ENCODE measurements at regions of chr3 and their contacts with region 1.

Region 1: DNA sequence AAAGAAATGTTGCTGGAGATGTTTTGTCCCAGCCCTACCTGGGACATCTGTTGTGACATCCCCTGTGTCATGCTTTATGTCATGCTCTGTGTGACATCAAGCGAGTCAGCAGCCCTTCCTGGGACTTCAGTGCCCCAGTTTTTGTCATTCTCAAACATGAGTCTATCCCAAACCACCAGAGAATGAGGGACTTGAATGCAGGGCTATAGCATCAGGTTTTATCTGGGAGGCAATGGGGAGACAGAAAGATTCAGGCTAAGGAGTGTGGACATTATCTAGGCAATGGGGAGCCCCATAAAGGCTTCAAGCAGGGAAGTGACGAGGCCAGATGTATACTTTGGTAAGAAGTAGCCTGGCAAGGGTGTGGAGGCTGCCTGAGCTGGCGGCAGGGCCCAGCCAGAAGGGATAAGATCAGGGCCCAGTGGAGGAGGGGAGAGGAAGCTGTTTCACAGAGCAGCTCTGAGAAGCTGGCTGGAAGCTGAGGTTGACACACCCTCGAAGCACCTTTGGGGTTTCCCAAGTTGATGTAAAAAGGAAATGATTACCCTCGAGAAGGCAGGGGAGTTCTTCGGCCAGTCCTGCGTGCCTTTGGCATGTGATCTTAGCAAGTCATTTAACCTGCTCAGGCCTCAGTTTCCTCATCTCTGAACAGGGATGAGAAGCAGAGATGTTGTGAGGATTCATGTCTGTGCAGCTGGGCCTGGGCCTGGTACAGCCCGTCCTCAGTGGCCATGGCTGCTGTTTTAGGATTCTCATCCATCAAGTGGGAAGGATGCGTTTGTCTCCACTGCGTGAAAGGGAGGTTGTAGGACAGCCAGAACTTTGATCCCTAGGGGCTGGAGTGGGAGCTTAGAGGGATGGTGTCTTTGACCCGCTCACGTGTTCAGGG is 34.3 kb downstream of the IRAK2 start:
- DNase-seq: peak; percentile 33 to 84 (median 67)
- ATAC-seq: peak; percentile 86
- H3K4me3 ChIP-seq: no peak overlapping the region
- H3K4me3 Mint-ChIP-seq: peak overlapping the region; percentile 66 to 80 (median 73)
- H3K27ac ChIP-seq: peak overlapping the region; percentile 89
- H3K27ac Mint-ChIP-seq: peak overlapping the region; percentile 84 to 99 (median 93)
- H3K4me1 ChIP-seq: peaks cover 46 to 57% of the 10 kb centered on the region in 2 donors
- H3K4me1 Mint-ChIP-seq: peaks cover 45 to 86% (median 72%) of the 10 kb centered on the region in 7 donors
- H3K27me3 ChIP-seq: no peaks in the 10 kb centered on the region
- H3K27me3 Mint-ChIP-seq: no peaks in the 10 kb centered on the region

Region 2: DNA sequence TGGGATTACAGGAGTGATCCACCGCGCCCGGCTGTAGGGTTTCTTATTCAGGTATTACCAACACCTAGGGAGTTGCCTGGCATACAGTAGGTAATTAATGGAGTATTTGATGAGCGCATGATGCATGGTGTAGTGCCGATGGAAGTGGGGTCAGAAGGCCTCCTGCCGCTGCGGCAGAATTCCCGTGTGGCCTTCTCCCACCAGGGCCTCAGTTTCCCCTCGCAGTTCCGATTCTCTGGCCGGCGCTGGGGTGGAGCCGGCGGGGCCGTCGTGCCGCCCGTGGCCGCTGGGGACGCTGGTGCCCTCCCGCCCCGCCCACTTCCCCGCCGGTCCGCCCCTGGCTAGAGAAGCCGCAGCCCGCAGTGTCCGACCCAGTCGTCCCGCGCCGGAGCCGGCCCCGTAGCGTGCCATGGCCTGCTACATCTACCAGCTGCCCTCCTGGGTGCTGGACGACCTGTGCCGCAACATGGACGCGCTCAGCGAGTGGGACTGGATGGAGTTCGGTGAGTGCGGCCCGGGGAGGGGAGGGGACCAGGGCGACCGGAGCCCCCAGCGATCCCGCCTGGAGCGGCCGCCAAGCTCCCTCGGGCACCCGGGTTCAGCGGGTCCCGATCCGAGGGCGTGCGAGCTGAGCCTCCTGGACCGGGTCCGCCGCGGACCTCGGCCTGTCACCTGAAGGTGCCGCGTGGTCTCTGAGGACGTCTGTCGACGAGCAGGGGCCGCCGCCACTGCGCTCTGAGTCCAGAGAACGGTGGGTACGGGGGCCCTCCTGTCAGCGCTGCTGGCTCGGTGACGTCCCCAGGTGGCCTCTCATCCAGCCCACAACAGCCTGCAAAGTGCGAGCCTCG is 34.2 kb before region 1 on chr3 and contains the start of gene IRAK2:
- CTCF ChIA-PET with region 1: interaction called, 9 read pairs
- POLR2A ChIA-PET with region 1: interaction called, 9 read pairs
- intact Hi-C with region 1: loop called (anchors 1 to 2 kb)
- DNase-seq: peak; percentile 25 to 75 (median 57)
- ATAC-seq: peak; percentile 92
- H3K4me3 ChIP-seq: peak within 1 kb of the TSS; percentile 85
- H3K4me3 Mint-ChIP-seq: peak within 1 kb of the TSS; percentile 79 to 94 (median 86)
- H3K27ac ChIP-seq: peak within 1 kb of the TSS; percentile 68
- H3K27ac Mint-ChIP-seq: peak within 1 kb of the TSS; percentile 2 to 89 (median 68)
- H3K4me1 ChIP-seq: peaks cover 5 to 9% of the 10 kb centered on the region in 2 donors
- H3K4me1 Mint-ChIP-seq: peaks cover 12 to 37% (median 25%) of the 10 kb centered on the region in 7 donors
- H3K27me3 ChIP-seq: no peaks in the 10 kb centered on the region
- H3K27me3 Mint-ChIP-seq: no peaks in the 10 kb centered on the region
- total RNA-seq, gene IRAK2: 1.5 to 4.8 (median 2.3) TPM

Region 3: GRCh38 chr3:10185804-10186762 is 12.9 kb before region 1 on chr3:
- CTCF ChIA-PET with region 1: interaction called, 4 read pairs
- POLR2A ChIA-PET with region 1: interaction called, 14 read pairs
- intact Hi-C with region 1: loop called (anchors 1 kb)
- DNase-seq: peak in 5 of 9 donors; percentile 16 to 48 (median 25)
- ATAC-seq: peak; percentile 72
- H3K4me3 ChIP-seq: no peak overlapping the region
- H3K4me3 Mint-ChIP-seq: peak overlapping the region; percentile 44 to 81 (median 73)
- H3K27ac ChIP-seq: peak overlapping the region; percentile 59
- H3K27ac Mint-ChIP-seq: peak overlapping the region; percentile 84 to 96 (median 90)
- H3K4me1 ChIP-seq: peaks cover 42 to 43% of the 10 kb centered on the region in 2 donors
- H3K4me1 Mint-ChIP-seq: peaks cover 33 to 67% (median 58%) of the 10 kb centered on the region in 7 donors
- H3K27me3 ChIP-seq: no peaks in the 10 kb centered on the region
- H3K27me3 Mint-ChIP-seq: no peaks in the 10 kb centered on the region

Region 4: GRCh38 chr3:10242182-10243065 is 43.4 kb after region 1 on chr3:
- CTCF ChIA-PET with region 1: interaction called, 6 read pairs
- POLR2A ChIA-PET with region 1: interaction called, 8 read pairs
- intact Hi-C with region 1: loop called (anchors 1 kb)
- DNase-seq: peak; percentile 20 to 93 (median 84)
- ATAC-seq: peak; percentile 98
- H3K4me3 ChIP-seq: peak overlapping the region; percentile 13
- H3K4me3 Mint-ChIP-seq: peak overlapping the region; percentile 75 to 82 (median 77)
- H3K27ac ChIP-seq: peak overlapping the region; percentile 71
- H3K27ac Mint-ChIP-seq: peak overlapping the region; percentile 86 to 96 (median 93)
- H3K4me1 ChIP-seq: peaks cover 33 to 43% of the 10 kb centered on the region in 2 donors
- H3K4me1 Mint-ChIP-seq: peaks cover 40 to 60% (median 54%) of the 10 kb centered on the region in 7 donors
- H3K27me3 ChIP-seq: no peaks in the 10 kb centered on the region
- H3K27me3 Mint-ChIP-seq: no peaks in the 10 kb centered on the region